ENCODE measurements at regions of chr2 and their contacts with region 1.

Region 1: DNA sequence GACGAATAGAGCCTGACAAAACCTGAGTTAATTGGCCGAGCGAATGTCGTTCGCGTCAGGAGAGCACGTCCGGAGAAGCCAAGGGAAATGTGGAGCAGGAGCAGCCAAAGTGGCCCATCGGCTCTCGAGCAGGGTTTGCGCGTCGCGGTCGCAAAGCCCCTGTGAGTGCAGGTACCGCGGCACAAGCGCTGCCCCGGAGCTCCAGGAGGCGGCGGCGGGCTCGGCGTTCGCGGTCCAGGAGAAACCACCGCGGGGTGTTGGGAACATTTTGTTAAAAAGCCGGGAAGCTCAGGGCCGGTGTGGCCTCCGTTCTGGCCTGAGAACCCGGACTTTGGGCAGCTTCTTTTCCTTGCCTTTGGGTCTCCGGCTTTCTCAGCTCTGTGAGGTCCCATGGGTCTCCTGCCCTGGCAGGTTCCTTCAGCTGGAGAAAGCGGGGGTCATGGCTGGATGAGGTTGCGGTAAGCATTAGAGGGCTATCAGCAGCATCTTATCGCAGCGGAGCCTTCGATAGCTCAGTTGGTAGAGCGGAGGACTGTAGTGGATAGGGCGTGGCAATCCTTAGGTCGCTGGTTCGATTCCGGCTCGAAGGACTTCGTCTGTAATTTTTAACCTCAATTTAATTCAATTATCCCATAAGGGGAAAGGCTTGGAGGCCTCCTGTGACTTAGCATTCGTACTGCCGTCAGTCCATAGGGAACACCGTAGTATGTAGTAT is 1.0 kb upstream of the AGBL5 start:
- DNase-seq: peak; percentile 95
- H3K4me3 Mint-ChIP-seq: peak overlapping the region; percentile 98
- H3K27ac Mint-ChIP-seq: peak overlapping the region; percentile 97
- H3K4me1 Mint-ChIP-seq: peaks cover 28% of the 10 kb centered on the region
- H3K27me3 Mint-ChIP-seq: peaks cover 5% of the 10 kb centered on the region

Region 2: GRCh38 chr2:27032495-27033252 is 17.8 kb before region 1 on chr2 and contains the start of gene TMEM214:
- CTCF ChIA-PET with region 1: interaction called, 18 read pairs
- POLR2A ChIA-PET with region 1: interaction called, 54 read pairs
- DNase-seq: peak; percentile 87
- H3K4me3 Mint-ChIP-seq: peak within 1 kb of the TSS; percentile 93
- H3K27ac Mint-ChIP-seq: peak within 1 kb of the TSS; percentile 86
- H3K4me1 Mint-ChIP-seq: peaks cover 62% of the 10 kb centered on the region
- H3K27me3 Mint-ChIP-seq: no peaks in the 10 kb centered on the region
- total RNA-seq, gene TMEM214: 80.4 to 80.7 TPM

Region 3: DNA sequence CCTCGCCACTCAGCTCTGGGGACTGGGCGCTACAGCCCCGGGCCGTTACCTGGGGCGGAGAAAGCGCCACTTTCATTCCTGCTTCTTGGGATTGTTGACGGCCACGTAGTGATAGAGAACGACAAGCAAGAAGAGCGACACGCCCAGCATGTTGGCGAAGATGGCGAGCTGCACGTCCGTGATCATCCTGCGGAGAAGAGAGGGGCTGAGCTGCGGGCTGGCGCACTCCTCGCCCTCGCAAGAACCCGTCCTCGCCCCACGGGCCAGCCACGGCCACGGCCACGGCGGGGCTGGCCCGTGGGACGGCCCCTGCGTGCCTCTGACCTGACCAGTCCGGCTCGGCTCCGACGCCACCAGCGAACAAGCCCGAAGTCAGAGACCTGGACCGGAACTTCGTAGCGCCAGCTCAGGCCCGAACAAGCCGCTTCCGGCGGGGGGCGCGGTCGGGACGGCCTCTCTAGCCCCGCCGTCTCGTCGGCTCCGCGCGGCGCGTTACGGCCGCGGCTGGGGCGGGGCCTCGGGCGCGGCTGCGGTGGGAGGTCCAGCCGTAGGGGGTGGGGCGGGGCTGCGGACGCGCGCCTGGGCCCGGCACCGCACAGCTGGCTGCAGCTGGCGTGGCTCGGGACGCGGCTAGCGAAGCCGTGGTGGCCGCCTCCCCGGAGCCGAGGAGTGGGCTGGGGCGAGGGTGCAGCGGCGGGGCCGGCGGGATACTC is 21.0 kb after region 1 on chr2 and contains the start of gene OST4:
- CTCF ChIA-PET with region 1: interaction called, 11 read pairs
- POLR2A ChIA-PET with region 1: interaction called, 196 read pairs
- DNase-seq: peak; percentile 93
- H3K4me3 Mint-ChIP-seq: peak within 1 kb of the TSS; percentile 99
- H3K27ac Mint-ChIP-seq: peak within 1 kb of the TSS; percentile 95
- H3K4me1 Mint-ChIP-seq: peaks cover 73% of the 10 kb centered on the region
- H3K27me3 Mint-ChIP-seq: no peaks in the 10 kb centered on the region
- total RNA-seq, gene OST4: 305 to 312 TPM

Region 4: DNA sequence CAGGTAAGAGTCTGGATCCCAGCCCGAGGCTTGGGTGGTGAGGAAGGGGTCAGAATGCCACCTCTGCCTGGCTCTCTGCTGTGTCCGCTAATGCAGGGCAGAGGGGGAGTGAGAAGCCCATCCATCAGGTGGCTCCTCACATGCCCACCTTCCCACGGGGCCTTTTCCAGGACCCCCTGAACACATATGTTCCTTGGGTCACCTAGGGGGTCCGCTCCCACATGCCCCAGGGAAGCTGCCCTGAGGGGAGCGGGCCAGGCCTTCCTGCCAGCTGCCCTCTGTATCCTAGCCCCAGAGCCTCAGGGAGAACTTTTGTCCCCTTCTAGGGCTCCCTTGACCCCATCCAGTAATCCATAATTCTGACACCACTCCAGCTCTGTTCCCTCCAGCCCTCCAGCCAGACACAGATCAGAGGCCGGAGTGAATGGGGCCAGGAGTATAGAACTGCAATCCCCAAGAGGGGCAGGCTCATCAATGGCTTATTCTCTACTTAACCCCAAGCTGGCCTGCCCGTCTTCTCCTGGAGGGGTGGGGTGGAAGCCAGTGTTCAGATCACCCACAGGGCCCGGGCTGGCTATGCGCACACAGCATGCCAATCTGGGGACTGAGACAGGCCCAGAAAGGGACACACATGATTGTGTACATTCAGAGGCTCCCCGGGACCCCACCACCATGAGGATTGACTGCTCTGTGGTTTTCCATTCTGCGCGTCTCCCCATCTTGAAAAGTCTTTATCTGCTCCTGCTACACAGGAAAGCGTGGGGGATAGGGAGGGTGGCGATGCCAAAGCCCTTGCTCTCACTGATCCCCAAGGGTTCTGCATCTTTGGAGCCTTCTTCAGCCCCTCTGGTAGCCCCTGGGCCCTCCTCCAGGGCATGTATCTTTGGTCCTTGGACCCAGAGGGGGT is 29.0 kb after region 1 on chr2:
- CTCF ChIA-PET with region 1: interaction called, 16 read pairs
- POLR2A ChIA-PET with region 1: interaction called, 196 read pairs
- DNase-seq: no peak
- H3K4me3 Mint-ChIP-seq: no peak overlapping the region
- H3K27ac Mint-ChIP-seq: no peak overlapping the region
- H3K4me1 Mint-ChIP-seq: peaks cover 52% of the 10 kb centered on the region
- H3K27me3 Mint-ChIP-seq: peaks cover 2% of the 10 kb centered on the region

Region 5: GRCh38 chr2:27086090-27086723 is 35.8 kb after region 1 on chr2:
- CTCF ChIA-PET with region 1: interaction called, 16 read pairs
- POLR2A ChIA-PET with region 1: interaction called, 107 read pairs
- DNase-seq: peak; percentile 98
- H3K4me3 Mint-ChIP-seq: peak overlapping the region; percentile 79
- H3K27ac Mint-ChIP-seq: peak overlapping the region; percentile 80
- H3K4me1 Mint-ChIP-seq: peaks cover 41% of the 10 kb centered on the region
- H3K27me3 Mint-ChIP-seq: no peaks in the 10 kb centered on the region

Region 6: DNA sequence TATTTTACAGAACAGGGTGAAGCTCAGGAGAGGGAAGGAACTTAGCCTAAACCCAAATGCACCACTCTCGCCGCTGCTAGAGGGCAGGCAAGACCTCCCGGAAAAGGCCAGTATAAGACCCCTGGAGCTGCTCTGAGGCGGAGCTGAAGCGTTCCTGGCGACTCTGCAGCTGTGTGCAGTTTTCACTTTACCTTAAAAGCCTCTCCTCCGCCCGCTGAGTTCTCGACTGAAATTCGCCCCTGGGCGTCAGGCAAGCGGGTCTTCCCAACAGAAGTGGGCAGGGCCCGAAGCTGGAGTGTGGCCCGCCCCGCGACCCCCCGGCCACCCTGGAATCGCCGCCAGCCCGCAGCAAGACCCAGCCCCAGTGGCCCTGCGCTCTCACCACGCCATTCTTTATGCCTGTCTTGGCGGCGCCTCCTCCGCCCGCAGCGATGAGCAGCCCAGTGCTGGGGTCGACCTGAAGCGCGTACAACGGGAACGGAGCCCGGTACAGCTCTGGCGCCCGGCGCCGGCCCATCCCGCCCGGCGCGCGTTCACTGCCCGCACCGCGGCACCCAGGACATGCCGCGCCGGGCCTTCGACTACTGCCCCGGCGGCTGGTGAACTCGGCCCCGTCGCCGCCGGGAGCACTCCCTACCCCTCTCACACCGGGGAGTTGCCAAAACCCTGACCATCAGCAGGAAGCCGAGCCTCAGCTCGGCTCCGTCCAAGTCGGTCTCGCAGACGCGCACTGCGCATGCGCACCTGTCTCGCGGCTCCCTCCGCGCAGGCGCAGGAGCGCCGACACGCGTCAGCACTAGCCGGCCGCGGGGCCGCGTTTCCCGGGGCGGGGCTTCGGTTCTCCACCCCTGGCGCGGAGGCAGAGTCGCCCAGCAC is 83.7 kb after region 1 on chr2 and contains the start of gene PREB:
- CTCF ChIA-PET with region 1: interaction called, 3 read pairs
- POLR2A ChIA-PET with region 1: interaction called, 11 read pairs
- DNase-seq: peak; percentile 98
- H3K4me3 Mint-ChIP-seq: peak within 1 kb of the TSS; percentile 96
- H3K27ac Mint-ChIP-seq: peak within 1 kb of the TSS; percentile 96
- H3K4me1 Mint-ChIP-seq: peaks cover 34% of the 10 kb centered on the region
- H3K27me3 Mint-ChIP-seq: no peaks in the 10 kb centered on the region
- total RNA-seq, gene PREB: 67.4 to 72.7 TPM

Region 7: GRCh38 chr2:27211829-27212627 is 161.6 kb after region 1 on chr2 and contains the starts of genes ATRAID and SLC5A6:
- CTCF ChIA-PET with region 1: no interaction called
- POLR2A ChIA-PET with region 1: interaction called, 14 read pairs
- DNase-seq: peak; percentile 92
- H3K4me3 Mint-ChIP-seq: peak within 1 kb of the TSS; percentile 96
- H3K27ac Mint-ChIP-seq: peak within 1 kb of the TSS; percentile 96
- H3K4me1 Mint-ChIP-seq: peaks cover 50% of the 10 kb centered on the region
- H3K27me3 Mint-ChIP-seq: no peaks in the 10 kb centered on the region
- total RNA-seq, gene ATRAID: 94.9 to 97.8 TPM
- total RNA-seq, gene SLC5A6: 20.8 to 23.6 TPM

Region 8: DNA sequence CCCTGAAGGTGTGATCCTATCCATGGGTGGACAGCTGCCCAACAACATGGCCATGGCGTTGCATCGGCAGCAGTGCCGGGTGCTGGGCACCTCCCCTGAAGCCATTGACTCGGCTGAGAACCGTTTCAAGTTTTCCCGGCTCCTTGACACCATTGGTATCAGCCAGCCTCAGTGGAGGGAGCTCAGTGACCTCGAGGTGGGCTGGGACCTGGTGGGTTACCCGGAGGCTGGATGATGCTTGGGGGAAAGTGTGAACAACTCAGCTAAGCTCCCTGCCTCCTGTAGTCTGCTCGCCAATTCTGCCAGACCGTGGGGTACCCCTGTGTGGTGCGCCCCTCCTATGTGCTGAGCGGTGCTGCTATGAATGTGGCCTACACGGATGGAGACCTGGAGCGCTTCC is 182.9 kb after region 1 on chr2:
- CTCF ChIA-PET with region 1: no interaction called
- POLR2A ChIA-PET with region 1: no interaction called
- DNase-seq: no peak
- H3K4me3 Mint-ChIP-seq: no peak overlapping the region
- H3K27ac Mint-ChIP-seq: no peak overlapping the region
- H3K4me1 Mint-ChIP-seq: no peaks in the 10 kb centered on the region
- H3K27me3 Mint-ChIP-seq: no peaks in the 10 kb centered on the region

Measured in activated CD4-positive, alpha-beta memory T cell treated with anti-CD3 and anti-CD28 coated beads, Interleukin-2, amount 10 ng/mL, durations not matched to agents 7 days and 5 days (primary cell).